Left colon (tissue), 2 donors: ENCODE measurements at regions of chr1 and their contacts with region 1.

Region 1: DNA sequence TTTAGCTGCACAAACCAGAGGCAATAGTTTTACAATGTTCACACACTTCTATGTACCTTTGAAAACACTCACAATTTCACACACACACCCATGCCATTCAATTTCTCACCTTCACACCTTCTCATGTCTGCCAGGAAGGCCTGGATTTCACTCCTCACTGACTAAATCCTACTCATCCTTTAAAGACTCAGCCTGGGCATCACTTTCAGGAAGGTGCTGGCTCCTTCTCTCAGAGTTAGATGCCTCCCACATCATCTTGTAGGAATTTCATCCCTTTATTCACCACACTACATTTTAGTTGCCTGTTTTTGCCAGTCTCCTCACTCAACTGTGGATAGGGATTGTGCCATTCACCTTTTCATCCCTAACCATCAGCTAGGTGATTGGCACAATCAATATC is 2.3 kb downstream of the IL20 start:
- DNase-seq: no peak
- ATAC-seq: no peak

Region 2: GRCh38 chr1:206903662-206904061 is 35.9 kb after region 1 on chr1:
- intact Hi-C with region 1: loop called in 1 of 2 experiments (anchors 2 kb)
- DNase-seq: no peak
- ATAC-seq: no peak